Uterus (tissue), 4 donors: ENCODE measurements at regions of chr7 and their contacts with region 1.

Region 1: DNA sequence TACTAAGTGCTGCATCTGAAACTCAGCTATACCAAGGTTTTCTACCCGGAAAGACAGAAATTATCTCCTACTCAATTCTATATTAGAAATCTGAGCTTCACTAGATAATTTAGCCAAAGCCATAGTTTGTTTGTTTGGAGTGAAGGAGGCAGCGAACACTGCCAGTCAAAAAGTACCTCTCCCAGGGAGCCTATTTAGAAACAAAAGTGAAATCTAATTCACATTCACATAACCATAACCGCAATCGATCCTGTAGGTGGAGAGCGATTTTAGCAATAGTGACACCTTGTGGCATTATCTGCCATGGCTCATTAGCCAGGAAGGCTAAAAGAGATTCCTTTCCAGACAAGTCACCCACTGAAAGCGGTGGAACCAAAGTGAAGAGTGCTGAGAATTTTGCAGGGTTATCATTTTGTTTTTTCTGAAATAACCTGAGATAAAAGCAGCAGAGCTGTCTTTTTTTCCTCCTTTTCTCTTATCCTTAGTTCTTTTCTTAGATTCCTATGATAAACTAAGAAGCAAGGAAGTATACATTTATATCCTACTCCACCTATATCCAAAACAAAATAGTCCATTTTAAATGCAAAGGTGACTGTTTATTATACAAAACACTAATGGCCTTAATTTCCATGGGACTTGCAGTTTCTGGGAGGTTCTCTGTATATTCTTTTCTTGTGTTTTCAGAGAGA is 83.7 kb upstream of the BET1 start:
- DNase-seq: peak in 1 of 2 donors; percentile 31
- H3K4me3 ChIP-seq: peak overlapping the region in 1 of 2 donors; percentile 6
- H3K27ac ChIP-seq: no peak overlapping the region
- H3K4me1 ChIP-seq: no peaks in the 10 kb centered on the region
- H3K27me3 ChIP-seq: no peaks in the 10 kb centered on the region
- CTCF ChIP-seq: peak; percentile 69 to 76 (median 72)
- POLR2A ChIP-seq: no peak

Region 2: DNA sequence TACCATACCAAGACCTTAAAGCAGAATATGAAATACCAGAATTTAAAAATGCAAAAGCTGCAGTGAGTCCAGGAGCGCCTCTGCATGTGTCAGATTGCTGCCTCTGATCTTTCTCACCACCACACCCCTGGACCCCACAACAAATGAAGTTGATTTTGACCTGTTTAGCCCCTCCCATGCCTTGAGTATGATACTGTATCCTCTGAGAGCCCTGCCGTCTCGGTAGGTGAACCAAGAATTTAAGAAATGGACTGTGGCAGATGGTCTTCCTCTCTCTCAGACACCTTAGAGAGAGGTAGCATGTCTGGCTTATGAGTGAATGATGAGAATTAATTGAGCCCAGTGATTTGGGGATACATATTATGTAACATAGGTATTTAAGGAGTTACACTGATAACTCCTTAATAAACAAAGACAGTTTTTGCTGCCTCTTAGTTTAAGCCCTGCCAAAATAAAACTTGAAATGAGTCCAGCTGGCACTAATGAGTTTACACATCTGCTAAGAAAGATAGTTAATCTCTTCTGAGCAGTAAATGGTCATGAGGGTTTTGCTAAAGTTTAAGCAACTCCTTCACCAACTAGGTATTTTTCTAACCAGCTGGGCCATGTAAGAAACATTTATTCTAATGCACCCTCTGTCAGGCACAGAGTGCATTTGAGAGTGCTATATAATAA is 192.7 kb before region 1 on chr7:
- intact Hi-C with region 1: loop called (anchors 5 kb)
- DNase-seq: no peak
- H3K4me3 ChIP-seq: no peak overlapping the region
- H3K27ac ChIP-seq: no peak overlapping the region
- H3K4me1 ChIP-seq: no peaks in the 10 kb centered on the region
- H3K27me3 ChIP-seq: no peaks in the 10 kb centered on the region
- CTCF ChIP-seq: no peak
- POLR2A ChIP-seq: no peak